ENCODE measurements at regions of chr1 and their contacts with region 1.

Region 1: DNA sequence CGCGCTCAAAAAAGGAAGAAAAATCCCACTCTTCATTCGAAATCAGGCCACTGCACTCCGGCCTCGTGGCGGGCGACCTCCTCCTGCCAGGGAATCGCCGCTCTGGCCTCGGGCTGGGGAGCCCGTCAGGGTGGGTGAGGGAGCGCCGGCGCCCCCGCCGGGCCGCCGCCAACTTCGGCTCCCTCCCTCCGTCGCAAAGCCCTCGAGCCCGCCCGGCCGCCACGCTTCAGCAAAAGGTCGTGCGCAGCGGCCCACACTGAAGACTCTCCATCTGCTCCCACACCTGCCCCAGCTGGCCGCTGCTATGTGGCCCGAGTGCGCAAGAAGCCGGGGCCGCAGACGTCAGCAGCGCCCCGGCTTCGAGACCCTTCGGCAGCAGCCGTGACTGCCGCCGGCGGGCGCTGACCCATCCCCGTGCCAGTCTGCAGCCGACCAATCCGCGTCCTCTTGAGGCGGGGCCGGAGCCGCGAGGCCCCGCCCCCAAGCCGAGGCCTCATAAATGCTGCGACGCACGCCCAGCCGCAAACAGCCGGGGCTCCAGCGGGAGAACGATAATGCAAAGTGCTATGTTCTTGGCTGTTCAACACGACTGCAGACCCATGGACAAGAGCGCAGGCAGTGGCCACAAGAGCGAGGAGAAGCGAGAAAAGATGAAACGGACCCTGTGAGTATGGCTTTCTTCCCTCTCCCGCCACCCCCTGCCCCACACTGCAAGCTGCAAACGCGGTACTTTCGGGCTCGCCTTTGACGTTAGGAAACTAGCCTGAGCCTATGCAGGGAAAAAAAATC is at the start of gene RGS2:
- H3K4me3 Mint-ChIP-seq: peak within 1 kb of the TSS; percentile 93
- H3K27ac Mint-ChIP-seq: peak within 1 kb of the TSS; percentile 90
- H3K4me1 Mint-ChIP-seq: peaks cover 45% of the 10 kb centered on the region
- H3K27me3 Mint-ChIP-seq: no peaks in the 10 kb centered on the region

Region 2: DNA sequence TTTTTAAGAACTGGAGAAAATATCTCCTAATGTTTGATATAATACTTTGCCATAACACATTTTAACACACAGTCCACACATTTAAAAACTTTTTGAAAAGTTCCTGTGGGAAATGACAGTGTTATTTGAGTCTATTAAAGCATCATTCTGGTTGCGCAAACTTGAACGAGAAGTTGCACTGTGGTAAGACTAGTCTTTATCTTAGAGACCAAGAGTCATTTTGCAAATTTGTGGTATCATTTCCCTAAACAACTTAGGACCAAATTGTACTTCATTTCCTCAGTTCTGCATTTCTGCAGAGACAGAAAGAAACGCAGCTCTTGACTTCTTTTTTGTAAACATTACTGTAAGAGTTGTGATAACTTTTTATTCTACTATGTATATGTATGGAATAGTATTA is 650.5 kb before region 1 on chr1 and contains the start of gene RGS18:
- intact Hi-C with region 1: loop called (anchors 10 kb)
- H3K4me3 Mint-ChIP-seq: peak within 1 kb of the TSS; percentile 73
- H3K27ac Mint-ChIP-seq: peak within 1 kb of the TSS; percentile 97
- H3K4me1 Mint-ChIP-seq: peaks cover 31% of the 10 kb centered on the region
- H3K27me3 Mint-ChIP-seq: no peaks in the 10 kb centered on the region

Region 3: GRCh38 chr1:192877288-192877886 is 68.7 kb after region 1 on chr1:
- intact Hi-C with region 1: loop called (anchors 10 kb)
- H3K4me3 Mint-ChIP-seq: no peak overlapping the region
- H3K27ac Mint-ChIP-seq: no peak overlapping the region
- H3K4me1 Mint-ChIP-seq: peaks cover 56% of the 10 kb centered on the region
- H3K27me3 Mint-ChIP-seq: peaks cover 1% of the 10 kb centered on the region

Region 4: DNA sequence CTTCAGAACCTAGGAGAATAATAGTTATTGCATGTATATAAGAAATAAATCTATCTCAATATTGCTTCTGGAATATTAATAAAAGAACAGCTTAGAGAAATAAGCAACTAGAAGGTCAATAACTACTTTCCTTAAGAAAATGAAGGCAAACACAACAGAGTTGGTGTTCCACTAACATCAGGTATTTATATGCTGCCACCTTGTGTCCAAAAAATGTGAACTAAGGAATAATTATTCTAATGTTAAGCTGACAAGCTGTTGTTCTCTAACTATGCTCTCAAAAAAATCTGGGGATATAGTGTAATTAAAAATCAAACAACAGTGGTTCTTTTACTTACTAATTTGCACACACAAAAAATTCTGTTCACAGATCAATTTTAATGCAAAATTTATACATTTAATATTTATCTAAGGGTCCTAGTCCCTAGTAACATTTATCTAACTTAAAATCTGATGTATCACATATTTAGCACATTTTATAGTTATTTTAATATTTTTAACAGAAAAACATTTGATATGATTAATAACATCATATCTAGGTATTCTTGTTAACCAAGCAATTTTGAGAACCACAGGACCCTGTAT is 210.8 kb after region 1 on chr1:
- intact Hi-C with region 1: loop called (anchors 1 kb)
- H3K4me3 Mint-ChIP-seq: no peak overlapping the region
- H3K27ac Mint-ChIP-seq: no peak overlapping the region
- H3K4me1 Mint-ChIP-seq: no peaks in the 10 kb centered on the region
- H3K27me3 Mint-ChIP-seq: no peaks in the 10 kb centered on the region

Region 5: GRCh38 chr1:193104906-193105820 is 296.5 kb after region 1 on chr1 and contains the start of gene GLRX2:
- intact Hi-C with region 1: loop called (anchors 5 kb)
- H3K4me3 Mint-ChIP-seq: peak within 1 kb of the TSS; percentile 90
- H3K27ac Mint-ChIP-seq: peak within 1 kb of the TSS; percentile 93
- H3K4me1 Mint-ChIP-seq: peaks cover 24% of the 10 kb centered on the region
- H3K27me3 Mint-ChIP-seq: no peaks in the 10 kb centered on the region

Measured in dendritic cell treated with granulocyte-macrophage colony-stimulating factor and Interleukin-4, amounts not matched to agents 40 ng/mL and 50 ng/mL, for 4 days (primary cell).